ENCODE measurements at regions of chr17 and their contacts with region 1.

Region 1: GRCh38 chr17:50169121-50169764 is 3.4 kb downstream of the SGCA start:
- DNase-seq: no peak
- H3K4me3 ChIP-seq: peak overlapping the region in 1 of 2 donors; percentile 31
- H3K27ac ChIP-seq: peak overlapping the region; percentile 97 to 99
- H3K4me1 ChIP-seq: peaks cover 21 to 43% of the 10 kb centered on the region in 2 donors
- H3K27me3 ChIP-seq: no peaks in the 10 kb centered on the region
- CTCF ChIP-seq: peak; percentile 72 to 94 (median 75)

Region 2: DNA sequence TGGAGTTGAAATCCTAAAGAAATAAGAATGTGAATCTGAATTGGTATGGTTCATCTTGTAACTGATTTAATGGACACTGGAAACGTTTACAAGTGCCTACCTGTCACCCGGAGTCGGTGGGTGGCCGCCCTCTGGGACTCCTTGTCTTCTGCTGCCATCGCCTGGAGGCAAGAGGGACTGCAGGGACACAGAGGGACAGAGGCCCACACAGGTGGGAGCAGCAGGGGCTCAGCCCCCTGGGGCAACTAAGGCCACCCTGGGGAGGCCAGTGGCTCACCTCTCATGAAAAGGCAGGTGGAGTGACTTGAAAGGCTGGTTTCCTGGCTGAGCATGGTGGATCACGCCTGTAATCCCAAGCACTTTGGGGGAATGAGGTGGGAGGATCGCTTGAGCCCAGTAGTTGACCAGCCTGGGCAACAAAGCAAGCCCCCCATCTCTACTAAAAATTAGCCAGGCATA is 128.2 kb after region 1 on chr17:
- intact Hi-C with region 1: loop called (anchors 2 kb)
- DNase-seq: peak; percentile 43 to 85
- H3K4me3 ChIP-seq: no peak overlapping the region
- H3K27ac ChIP-seq: no peak overlapping the region
- H3K4me1 ChIP-seq: no peaks in the 10 kb centered on the region
- H3K27me3 ChIP-seq: no peaks in the 10 kb centered on the region
- CTCF ChIP-seq: peak; percentile 98 to 99 (median 98)